Adrenal gland (tissue), 19 donors: ENCODE measurements at regions of chr17 and their contacts with region 1.

Region 1: DNA sequence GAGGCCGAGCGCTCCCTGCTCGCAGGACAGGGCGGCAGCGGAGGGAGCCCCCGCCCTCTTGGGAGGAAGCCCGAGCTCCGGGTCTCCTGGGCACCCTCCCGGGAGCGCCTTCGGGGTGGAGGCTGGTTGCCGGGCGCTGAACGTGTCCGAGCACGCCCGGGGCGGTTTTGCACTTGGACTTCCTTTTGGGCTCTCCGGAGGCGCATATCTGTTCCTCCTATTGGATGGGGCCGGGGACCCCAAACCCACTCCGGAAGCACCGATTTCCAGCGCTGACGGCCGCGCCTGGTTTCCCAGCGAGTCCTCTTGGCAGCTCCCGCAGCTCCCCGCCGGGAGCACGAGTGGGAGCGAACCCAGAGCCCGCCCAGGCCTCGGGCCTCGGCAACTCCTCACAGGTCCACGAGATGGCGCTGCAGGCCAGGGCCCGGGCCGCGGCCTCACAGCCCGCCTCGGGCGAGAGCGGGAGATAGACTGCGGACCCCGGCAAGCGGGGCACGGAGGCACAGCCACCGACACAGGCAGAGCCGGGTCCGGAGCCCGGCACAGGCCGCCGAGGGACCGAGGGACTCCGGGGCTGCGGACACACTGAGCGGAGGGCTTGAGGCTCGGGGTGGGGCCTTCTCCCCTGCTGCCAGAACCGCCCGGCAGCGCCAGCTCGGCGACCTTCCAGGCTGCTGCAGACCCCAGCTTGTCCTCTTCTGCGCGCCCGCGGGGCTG is 12.7 kb downstream of the TBX2 start:
- DNase-seq: peak; percentile 64 to 91 (median 79)
- H3K4me3 ChIP-seq: peak overlapping the region in 3 of 4 donors; percentile 31 to 76 (median 46)
- H3K27ac ChIP-seq: peak overlapping the region; percentile 11 to 91 (median 86)
- H3K4me1 ChIP-seq: peaks cover 0 to 52% of the 10 kb centered on the region in 2 donors
- H3K27me3 ChIP-seq: no peaks in the 10 kb centered on the region
- CTCF ChIP-seq: peak; percentile 83 to 99 (median 98)
- POLR2A ChIP-seq: peak in 1 of 2 donors; percentile 32

Region 2: GRCh38 chr17:61551255-61551742 is 139.0 kb after region 1 on chr17:
- intact Hi-C with region 1: loop called (anchors 2 to 10 kb)
- DNase-seq: no peak
- H3K4me3 ChIP-seq: no peak overlapping the region
- H3K27ac ChIP-seq: no peak overlapping the region
- H3K4me1 ChIP-seq: no peaks in the 10 kb centered on the region
- H3K27me3 ChIP-seq: peaks cover 17% of the 10 kb centered on the region
- CTCF ChIP-seq: peak; percentile 46 to 75 (median 69)
- POLR2A ChIP-seq: no peak

Region 3: DNA sequence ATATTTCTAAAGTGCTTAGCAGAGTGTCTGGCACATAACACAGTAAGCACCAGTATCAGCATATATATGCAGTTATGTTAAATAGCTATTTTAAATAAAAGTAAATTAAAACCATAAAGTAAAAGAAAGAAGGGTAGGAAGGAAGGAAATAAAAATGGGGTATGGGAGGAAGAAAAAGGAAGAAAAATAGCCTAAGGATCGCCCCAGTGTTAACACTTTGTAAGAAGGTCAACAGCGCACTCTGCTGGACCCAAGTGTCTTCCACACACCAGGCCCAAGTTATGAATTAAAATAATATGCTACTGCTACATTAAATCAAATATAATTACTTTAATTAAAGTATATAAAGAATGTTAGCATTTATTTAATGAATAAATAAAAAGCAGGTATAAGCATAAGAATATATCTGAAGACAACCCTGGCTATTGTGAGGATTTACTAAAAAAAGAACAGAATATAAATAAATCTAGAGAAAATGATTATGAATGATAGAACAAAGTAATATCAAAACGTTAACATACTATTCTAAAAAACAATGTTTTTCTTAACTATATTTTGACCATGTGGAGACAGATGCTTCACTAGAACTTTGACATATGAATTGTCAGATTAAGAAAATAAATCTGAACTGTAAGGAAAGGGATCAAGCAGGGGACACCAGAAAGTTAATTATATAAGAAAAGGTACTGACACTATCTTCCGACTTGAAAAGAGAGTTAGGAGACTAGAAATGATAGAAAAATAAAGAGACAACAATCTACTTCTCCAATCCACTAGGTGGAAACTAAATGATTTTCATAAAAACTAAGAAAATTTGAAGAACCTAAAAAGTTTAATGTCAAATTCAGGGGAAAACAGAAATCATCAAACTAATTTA is 425.1 kb after region 1 on chr17:
- intact Hi-C with region 1: loop called in 1 of 2 experiments (anchors 5 kb)
- DNase-seq: peak; percentile 40 to 72 (median 61)
- H3K4me3 ChIP-seq: no peak overlapping the region
- H3K27ac ChIP-seq: no peak overlapping the region
- H3K4me1 ChIP-seq: no peaks in the 10 kb centered on the region
- H3K27me3 ChIP-seq: no peaks in the 10 kb centered on the region
- CTCF ChIP-seq: peak; percentile 48 to 83 (median 66)
- POLR2A ChIP-seq: no peak